ENCODE measurements at regions of chr9 and their contacts with region 1.

Region 1: DNA sequence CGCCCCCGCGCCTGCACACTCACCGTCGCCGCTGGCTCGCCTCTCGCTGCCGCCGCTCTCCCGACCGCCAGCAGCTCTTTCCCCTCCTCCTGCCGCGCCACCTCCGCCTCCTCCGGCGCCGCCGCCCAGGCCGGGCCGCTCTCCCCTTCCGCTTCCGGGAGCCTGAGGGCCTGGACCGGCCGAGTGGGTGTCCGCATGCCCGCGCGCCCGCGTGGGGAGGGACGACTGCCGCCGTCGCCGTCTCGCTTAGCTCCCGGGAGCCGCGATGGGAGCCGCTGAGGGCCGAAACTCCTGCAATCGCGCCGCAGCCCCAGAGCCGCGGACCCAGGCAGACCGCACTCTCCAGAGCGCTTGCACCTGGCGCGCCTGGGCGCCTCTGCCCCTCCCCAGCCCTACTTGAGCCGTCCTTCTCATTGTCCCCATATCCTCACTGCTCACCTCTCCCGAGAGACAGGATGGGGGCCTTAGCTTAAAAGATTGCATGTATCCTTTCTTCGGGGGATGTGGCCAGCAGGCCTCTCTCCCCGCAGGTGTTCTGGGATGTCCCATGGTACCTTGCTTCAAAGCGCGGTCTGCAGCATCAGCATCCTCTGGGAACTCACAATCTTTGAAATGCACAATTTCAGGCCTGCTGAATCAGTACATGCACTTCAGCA is at the start of gene ZDHHC21:
- DNase-seq: peak; percentile 52 to 62
- ATAC-seq: peak; percentile 87 to 92 (median 92)
- H3K4me3 ChIP-seq: peak within 1 kb of the TSS; percentile 54
- H3K4me3 Mint-ChIP-seq: peak within 1 kb of the TSS; percentile 94
- H3K27ac ChIP-seq: peak within 1 kb of the TSS; percentile 41
- H3K27ac Mint-ChIP-seq: peak within 1 kb of the TSS; percentile 69 to 89
- H3K4me1 ChIP-seq: peaks cover 10% of the 10 kb centered on the region
- H3K4me1 Mint-ChIP-seq: peaks cover 41 to 52% of the 10 kb centered on the region in 2 donors
- H3K27me3 ChIP-seq: no peaks in the 10 kb centered on the region
- H3K27me3 Mint-ChIP-seq: peaks cover 6% of the 10 kb centered on the region in 2 donors
- CTCF ChIP-seq: no peak
- total RNA-seq, gene ZDHHC21: 9.2 to 17.8 (median 12.9) TPM

Region 2: GRCh38 chr9:14706530-14707140 is 13.3 kb after region 1 on chr9:
- intact Hi-C with region 1: no loop called
- DNase-seq: no peak
- ATAC-seq: no peak
- H3K4me3 ChIP-seq: no peak overlapping the region
- H3K4me3 Mint-ChIP-seq: no peak overlapping the region
- H3K27ac ChIP-seq: no peak overlapping the region
- H3K27ac Mint-ChIP-seq: no peak overlapping the region
- H3K4me1 ChIP-seq: no peaks in the 10 kb centered on the region
- H3K4me1 Mint-ChIP-seq: peaks cover 0 to 6% of the 10 kb centered on the region in 2 donors
- H3K27me3 ChIP-seq: peaks cover 3% of the 10 kb centered on the region
- H3K27me3 Mint-ChIP-seq: peaks cover 17 to 42% of the 10 kb centered on the region in 2 donors
- CTCF ChIP-seq: no peak

Region 3: GRCh38 chr9:14752271-14752670 is 58.9 kb after region 1 on chr9:
- intact Hi-C with region 1: loop called (anchors 10 kb)
- DNase-seq: no peak
- ATAC-seq: no peak
- H3K4me3 ChIP-seq: no peak overlapping the region
- H3K4me3 Mint-ChIP-seq: no peak overlapping the region
- H3K27ac ChIP-seq: no peak overlapping the region
- H3K27ac Mint-ChIP-seq: no peak overlapping the region
- H3K4me1 ChIP-seq: no peaks in the 10 kb centered on the region
- H3K4me1 Mint-ChIP-seq: no peaks in the 10 kb centered on the region
- H3K27me3 ChIP-seq: no peaks in the 10 kb centered on the region
- H3K27me3 Mint-ChIP-seq: peaks cover 6 to 47% of the 10 kb centered on the region in 2 donors
- CTCF ChIP-seq: no peak

Region 4: DNA sequence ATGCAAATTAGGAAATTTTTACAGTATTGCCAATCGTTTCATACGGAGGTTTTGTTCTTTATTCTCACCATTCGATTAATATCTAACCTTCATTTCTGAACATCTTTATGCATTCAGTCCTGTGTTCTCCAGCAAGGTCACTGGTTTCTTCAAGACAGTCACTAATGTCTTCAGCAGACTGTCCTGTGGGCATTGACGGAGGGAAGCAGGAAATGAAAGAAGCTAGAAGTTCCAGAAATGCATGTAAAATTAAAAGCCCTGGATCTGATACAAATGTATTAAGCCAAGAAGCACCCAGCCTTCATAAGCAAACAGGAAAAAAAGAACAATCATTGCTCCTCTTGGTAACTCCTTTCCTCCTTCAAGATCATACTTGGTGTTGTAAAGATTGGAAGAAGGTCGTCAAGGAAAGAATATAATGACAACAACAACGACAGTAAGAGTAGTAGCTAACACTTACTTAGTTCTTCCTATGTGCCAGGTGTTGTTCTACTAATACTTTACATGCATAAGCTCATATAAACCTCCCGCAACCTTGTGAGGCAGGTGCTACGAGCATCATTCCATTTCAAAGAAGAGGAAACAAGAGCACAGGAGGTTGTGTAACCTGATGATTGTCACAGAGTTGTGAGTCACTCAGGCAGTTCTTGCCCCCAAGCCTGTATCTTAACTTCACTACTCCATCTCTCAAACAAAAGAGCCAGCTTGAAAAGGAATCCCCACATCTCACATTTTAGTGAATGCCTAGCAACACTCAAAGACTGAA is 89.1 kb after region 1 on chr9:
- intact Hi-C with region 1: no loop called
- DNase-seq: no peak
- ATAC-seq: no peak
- H3K4me3 ChIP-seq: no peak overlapping the region
- H3K4me3 Mint-ChIP-seq: no peak overlapping the region
- H3K27ac ChIP-seq: no peak overlapping the region
- H3K27ac Mint-ChIP-seq: no peak overlapping the region
- H3K4me1 ChIP-seq: no peaks in the 10 kb centered on the region
- H3K4me1 Mint-ChIP-seq: no peaks in the 10 kb centered on the region
- H3K27me3 ChIP-seq: no peaks in the 10 kb centered on the region
- H3K27me3 Mint-ChIP-seq: peaks cover 0 to 2% of the 10 kb centered on the region in 2 donors
- CTCF ChIP-seq: no peak